Activated CD4-positive, alpha-beta T cell treated with anti-CD3 and anti-CD28 coated beads for 36 hours (primary cell): ENCODE measurements at regions of chr12 and their contacts with region 1.

Region 1: DNA sequence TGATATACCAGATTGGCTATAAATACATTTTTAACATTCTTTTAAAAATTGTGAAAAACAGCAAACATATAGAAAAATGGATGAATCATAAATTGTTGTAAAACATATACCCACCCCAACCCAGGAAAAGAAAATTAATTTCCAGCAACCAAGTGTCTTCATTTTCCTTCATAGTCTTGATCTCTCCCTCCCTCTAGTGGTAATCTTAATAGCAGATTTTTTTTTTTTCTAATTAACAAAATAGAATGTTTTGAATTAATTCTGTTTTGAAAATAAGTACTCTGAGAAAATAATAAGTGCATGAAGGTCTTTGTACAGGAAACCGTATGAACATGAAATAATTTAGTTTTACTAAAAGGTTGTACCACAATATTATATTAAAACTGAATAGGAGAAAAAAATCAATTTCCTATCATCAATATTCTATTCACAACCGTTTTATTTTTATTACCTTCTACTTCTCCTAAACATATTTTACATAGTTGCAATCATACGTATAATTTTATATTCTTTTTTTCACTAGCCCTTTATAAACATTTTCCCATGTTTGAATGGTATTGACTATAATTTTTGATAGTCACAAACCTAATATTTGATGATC is 7.0 kb downstream of the ETNK1 start:
- DNase-seq: no peak
- ATAC-seq: no peak
- H3K4me3 Mint-ChIP-seq: no peak overlapping the region
- H3K27ac Mint-ChIP-seq: no peak overlapping the region
- H3K4me1 Mint-ChIP-seq: peaks cover 67% of the 10 kb centered on the region
- H3K27me3 Mint-ChIP-seq: no peaks in the 10 kb centered on the region

Region 2: GRCh38 chr12:21657326-21658077 is 974.5 kb before region 1 on chr12 and contains the start of gene LDHB:
- CTCF ChIA-PET with region 1: no interaction called
- POLR2A ChIA-PET with region 1: no interaction called
- intact Hi-C with region 1: loop called in 1 of 2 experiments (anchors 5 kb)
- DNase-seq: peak; percentile 97
- ATAC-seq: peak; percentile 97
- H3K4me3 Mint-ChIP-seq: peak within 1 kb of the TSS; percentile 81
- H3K27ac Mint-ChIP-seq: peak within 1 kb of the TSS; percentile 99
- H3K4me1 Mint-ChIP-seq: peaks cover 45% of the 10 kb centered on the region
- H3K27me3 Mint-ChIP-seq: no peaks in the 10 kb centered on the region
- total RNA-seq, gene LDHB: 918 to 1,852 TPM

Region 3: DNA sequence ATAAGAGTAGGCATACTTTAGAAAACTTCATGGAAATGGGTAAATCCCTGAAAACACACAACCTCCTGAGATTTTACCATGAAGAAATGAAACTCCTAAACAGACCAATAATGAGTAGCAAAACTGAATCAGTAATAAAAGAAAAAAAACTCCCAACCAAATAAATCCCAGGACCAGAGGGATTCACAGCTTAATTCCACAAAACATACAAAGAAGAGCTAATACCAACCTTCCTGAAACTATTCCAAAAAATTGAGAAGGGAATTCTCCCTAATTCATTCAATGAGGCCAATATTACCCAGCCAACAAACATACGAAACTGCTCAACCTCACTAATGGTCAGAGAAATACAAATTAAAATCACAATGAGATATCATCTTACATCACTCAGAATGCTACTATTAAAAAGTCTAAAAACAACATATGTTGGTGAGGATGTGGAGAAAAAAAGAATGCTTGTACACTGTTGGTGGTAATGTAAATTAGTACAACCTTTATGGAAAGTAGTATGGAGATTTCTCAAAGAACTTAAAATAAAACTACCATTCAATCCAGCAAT is 200.2 kb before region 1 on chr12:
- CTCF ChIA-PET with region 1: no interaction called
- POLR2A ChIA-PET with region 1: no interaction called
- intact Hi-C with region 1: no loop called
- DNase-seq: no peak
- ATAC-seq: no peak
- H3K4me3 Mint-ChIP-seq: peak overlapping the region; percentile 19
- H3K27ac Mint-ChIP-seq: peak overlapping the region; percentile 47
- H3K4me1 Mint-ChIP-seq: peaks cover 13% of the 10 kb centered on the region
- H3K27me3 Mint-ChIP-seq: no peaks in the 10 kb centered on the region

Region 4: GRCh38 chr12:22529281-22530060 is 102.5 kb before region 1 on chr12:
- CTCF ChIA-PET with region 1: interaction called, 7 read pairs
- POLR2A ChIA-PET with region 1: no interaction called
- intact Hi-C with region 1: loop called (anchors 1 kb)
- DNase-seq: no peak
- ATAC-seq: peak; percentile 91
- H3K4me3 Mint-ChIP-seq: no peak overlapping the region
- H3K27ac Mint-ChIP-seq: no peak overlapping the region
- H3K4me1 Mint-ChIP-seq: peaks cover 8% of the 10 kb centered on the region
- H3K27me3 Mint-ChIP-seq: no peaks in the 10 kb centered on the region

Region 5: GRCh38 chr12:22588817-22589216 is 43.1 kb before region 1 on chr12:
- CTCF ChIA-PET with region 1: no interaction called
- POLR2A ChIA-PET with region 1: no interaction called
- intact Hi-C with region 1: no loop called
- DNase-seq: no peak
- ATAC-seq: no peak
- H3K4me3 Mint-ChIP-seq: no peak overlapping the region
- H3K27ac Mint-ChIP-seq: no peak overlapping the region
- H3K4me1 Mint-ChIP-seq: no peaks in the 10 kb centered on the region
- H3K27me3 Mint-ChIP-seq: peaks cover 2% of the 10 kb centered on the region

Region 6: GRCh38 chr12:24364921-24365320 is 1733.0 kb after region 1 on chr12:
- CTCF ChIA-PET with region 1: no interaction called
- POLR2A ChIA-PET with region 1: no interaction called
- intact Hi-C with region 1: no loop called
- DNase-seq: no peak
- ATAC-seq: no peak
- H3K4me3 Mint-ChIP-seq: no peak overlapping the region
- H3K27ac Mint-ChIP-seq: no peak overlapping the region
- H3K4me1 Mint-ChIP-seq: no peaks in the 10 kb centered on the region
- H3K27me3 Mint-ChIP-seq: no peaks in the 10 kb centered on the region